MCF 10A (cell line): ENCODE measurements at regions of chr6 and their contacts with region 1.

Region 1: DNA sequence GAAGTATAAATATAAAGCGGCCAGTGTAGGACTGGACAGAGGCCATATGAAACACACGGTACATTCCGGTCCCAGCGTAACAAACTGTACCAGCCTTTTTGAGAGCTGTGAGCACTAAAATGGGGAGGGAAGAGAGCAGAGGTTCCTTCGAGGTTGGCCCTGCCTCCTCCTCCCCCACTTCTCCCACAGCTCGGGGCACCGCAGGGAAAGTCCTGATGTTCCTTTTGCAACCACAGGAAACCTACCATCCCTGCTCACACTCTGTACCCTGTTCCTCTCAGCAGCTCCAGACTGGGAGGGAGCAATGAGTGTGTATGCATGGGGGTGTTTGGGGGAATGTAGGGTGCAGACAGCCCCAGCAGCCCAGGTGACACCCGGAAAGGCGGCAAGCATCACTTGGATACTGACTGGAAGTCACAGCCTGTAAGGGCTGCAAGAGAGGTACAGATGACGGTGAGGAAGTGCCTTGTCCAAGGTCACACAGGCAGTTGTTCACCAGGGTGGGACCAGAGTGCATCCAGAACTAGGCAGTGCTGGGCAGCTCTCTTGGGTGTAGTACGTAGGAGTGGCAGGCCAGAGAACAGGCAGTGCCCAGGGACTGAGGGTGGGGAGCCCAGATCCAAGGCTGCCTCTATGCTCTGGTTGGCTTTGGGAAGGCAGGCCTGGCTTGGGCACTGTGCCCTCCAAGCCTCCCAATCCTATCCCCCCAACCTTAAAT is 11.0 kb upstream of the ARMC12 start:
- DNase-seq: peak; percentile 94
- H3K4me3 Mint-ChIP-seq: peak overlapping the region; percentile 77
- H3K27ac Mint-ChIP-seq: peak overlapping the region; percentile 89
- H3K4me1 Mint-ChIP-seq: peaks cover 62% of the 10 kb centered on the region
- H3K27me3 Mint-ChIP-seq: no peaks in the 10 kb centered on the region
- CTCF ChIP-seq: no peak

Region 2: GRCh38 chr6:35710241-35710847 is 15.5 kb before region 1 on chr6:
- CTCF ChIA-PET with region 1: interaction called, 5 read pairs
- POLR2A ChIA-PET with region 1: interaction called, 68 read pairs
- intact Hi-C with region 1: no loop called
- DNase-seq: peak; percentile 86
- H3K4me3 Mint-ChIP-seq: no peak overlapping the region
- H3K27ac Mint-ChIP-seq: no peak overlapping the region
- H3K4me1 Mint-ChIP-seq: peaks cover 13% of the 10 kb centered on the region
- H3K27me3 Mint-ChIP-seq: no peaks in the 10 kb centered on the region
- CTCF ChIP-seq: no peak

Region 3: DNA sequence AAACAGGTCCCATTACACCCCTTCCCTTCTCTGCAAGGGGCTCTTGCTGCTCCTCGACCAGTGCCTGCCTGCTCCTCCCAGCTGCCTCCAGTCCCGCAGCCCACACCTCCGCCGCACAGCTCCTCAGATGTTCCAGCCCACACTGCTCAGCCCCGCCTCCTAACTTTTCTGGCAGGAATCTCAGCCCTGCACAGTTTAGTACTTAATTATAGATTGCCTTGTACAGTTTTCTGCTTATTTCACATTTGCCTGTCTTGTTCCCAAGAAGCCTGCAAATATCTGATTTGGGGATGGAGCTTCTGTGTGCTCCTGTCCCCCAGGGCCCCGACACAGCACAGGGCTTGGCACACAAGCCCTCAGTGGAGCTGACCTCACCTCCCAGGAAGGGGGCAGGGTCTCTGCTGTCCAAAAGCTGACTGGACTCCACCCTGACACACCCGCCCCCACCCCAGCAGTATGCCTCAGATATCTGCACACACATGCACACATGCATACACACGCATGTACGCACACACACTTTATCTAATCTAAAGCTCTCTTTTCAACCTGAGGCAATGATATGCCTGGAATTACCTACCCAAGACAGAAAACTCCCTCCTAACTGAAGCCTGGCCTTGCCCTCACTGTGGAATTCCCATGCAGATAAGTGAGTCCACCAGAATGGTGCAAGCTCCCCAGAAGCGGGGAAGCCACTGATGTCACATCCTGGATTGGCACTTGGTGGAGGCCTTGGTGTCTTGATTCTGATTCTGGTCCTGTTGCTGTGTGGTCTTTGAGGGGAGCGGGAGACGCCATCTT is 542.8 kb after region 1 on chr6:
- CTCF ChIA-PET with region 1: no interaction called
- POLR2A ChIA-PET with region 1: no interaction called
- intact Hi-C with region 1: no loop called
- DNase-seq: no peak
- H3K4me3 Mint-ChIP-seq: no peak overlapping the region
- H3K27ac Mint-ChIP-seq: no peak overlapping the region
- H3K4me1 Mint-ChIP-seq: peaks cover 18% of the 10 kb centered on the region
- H3K27me3 Mint-ChIP-seq: peaks cover 53% of the 10 kb centered on the region
- CTCF ChIP-seq: no peak